ENCODE measurements at regions of chr19 and their contacts with region 1.

Region 1: DNA sequence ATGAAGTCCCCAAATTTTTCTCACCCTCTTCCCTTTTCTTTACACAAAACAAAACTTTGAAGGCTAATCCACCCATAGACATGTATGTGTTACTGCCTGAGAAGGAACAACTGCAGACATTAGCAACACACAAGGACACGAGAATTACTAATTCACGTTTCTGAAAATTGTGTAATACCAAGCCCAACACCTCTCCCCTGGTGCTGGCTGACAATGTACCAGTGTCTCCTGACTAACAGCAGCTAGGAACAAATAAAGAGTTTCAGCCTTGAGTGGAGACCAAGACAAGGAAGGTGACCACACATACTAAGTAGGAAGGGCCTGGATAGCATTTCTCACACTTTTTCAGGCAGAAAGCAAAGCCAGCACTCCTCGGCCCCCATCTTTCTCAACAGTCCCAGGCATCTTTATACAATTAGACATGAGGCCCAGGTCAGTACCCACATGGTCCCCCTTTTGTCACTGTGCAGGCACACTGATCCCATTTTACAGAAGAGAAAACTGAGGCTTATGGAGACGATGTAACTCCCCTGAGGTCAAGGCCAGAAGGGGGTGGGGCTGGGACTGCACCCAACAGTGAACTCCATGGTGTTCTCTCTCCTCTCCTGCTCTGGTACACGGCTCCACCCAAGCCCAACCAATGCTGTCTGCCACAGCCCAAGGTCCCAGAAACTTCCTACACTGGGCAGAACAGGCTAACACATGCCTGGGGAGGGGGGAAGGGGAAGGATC is 8.7 kb downstream of the BRD4 start:
- DNase-seq: peak in 2 of 5 donors; percentile 67 to 68
- ATAC-seq: peak; percentile 64 to 80 (median 76)
- H3K4me3 ChIP-seq: no peak overlapping the region
- H3K27ac ChIP-seq: peak overlapping the region in 9 of 12 donors; percentile 25 to 75 (median 59)
- H3K4me1 ChIP-seq: peaks cover 19 to 99% (median 95%) of the 10 kb centered on the region in 12 donors
- H3K27me3 ChIP-seq: no peaks in the 10 kb centered on the region
- CTCF ChIP-seq: no peak
- POLR2A ChIP-seq: no peak

Region 2: GRCh38 chr19:14795078-14795721 is 528.5 kb before region 1 on chr19:
- intact Hi-C with region 1: no loop called
- DNase-seq: no peak
- ATAC-seq: no peak
- H3K4me3 ChIP-seq: no peak overlapping the region
- H3K27ac ChIP-seq: no peak overlapping the region
- H3K4me1 ChIP-seq: peaks cover 0 to 12% (median 0%) of the 10 kb centered on the region in 12 donors
- H3K27me3 ChIP-seq: peaks cover 0 to 8% (median 0%) of the 10 kb centered on the region in 9 donors
- CTCF ChIP-seq: no peak
- POLR2A ChIP-seq: no peak

Region 3: GRCh38 chr19:15280915-15281683 is 42.6 kb before region 1 on chr19:
- intact Hi-C with region 1: loop called in 5 of 10 experiments (anchors 5 kb)
- DNase-seq: peak; percentile 81 to 92 (median 90)
- ATAC-seq: peak; percentile 82 to 92 (median 88)
- H3K4me3 ChIP-seq: peak overlapping the region in 2 of 12 donors; percentile 10 to 13
- H3K27ac ChIP-seq: peak overlapping the region in 11 of 12 donors; percentile 14 to 83 (median 58)
- H3K4me1 ChIP-seq: peaks cover 45 to 100% (median 96%) of the 10 kb centered on the region in 12 donors
- H3K27me3 ChIP-seq: no peaks in the 10 kb centered on the region
- CTCF ChIP-seq: peak in 8 of 12 donors; percentile 10 to 53 (median 22)
- POLR2A ChIP-seq: no peak

Region 4: DNA sequence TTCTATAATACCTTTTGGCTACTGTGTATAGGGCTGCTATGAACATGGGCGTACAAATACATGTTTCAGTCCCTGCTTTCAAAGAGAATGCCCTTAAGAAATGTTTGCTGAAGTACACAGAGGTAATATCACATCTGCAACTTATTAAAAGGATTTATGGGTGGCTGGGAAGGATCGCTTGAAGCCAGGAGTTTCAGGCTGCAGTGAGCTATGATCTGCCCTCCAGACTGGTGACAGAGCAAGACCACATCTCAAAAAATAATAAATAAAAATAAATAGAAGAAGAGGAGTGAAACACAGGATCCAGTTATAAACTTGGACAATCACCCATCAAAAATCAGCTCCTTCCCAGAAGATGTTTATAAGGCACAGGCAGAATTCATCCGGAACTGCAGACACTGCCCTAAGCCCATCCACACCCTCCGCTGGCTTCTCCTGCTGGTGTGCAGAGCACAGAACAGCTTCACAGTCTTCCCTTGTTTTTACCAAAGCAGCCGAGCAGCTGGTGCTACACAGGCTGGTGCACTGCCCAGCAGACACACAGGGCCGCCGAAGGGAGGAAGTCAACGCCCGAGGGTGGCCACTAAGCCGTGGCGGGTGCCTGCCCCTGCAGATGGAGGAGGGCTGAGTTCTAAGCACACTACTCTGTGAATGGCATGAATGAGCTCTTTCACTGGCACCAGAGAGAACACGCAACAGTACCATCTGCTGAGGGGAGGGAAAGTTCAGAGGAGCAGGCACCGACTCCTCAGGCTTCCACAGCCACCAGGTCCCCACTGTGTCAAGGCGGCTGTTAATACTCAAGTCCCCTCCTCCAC is 35.3 kb before region 1 on chr19:
- intact Hi-C with region 1: loop called in 7 of 10 experiments (anchors 5 kb)
- DNase-seq: peak in 1 of 5 donors; percentile 60
- ATAC-seq: peak; percentile 25 to 55 (median 32)
- H3K4me3 ChIP-seq: peak overlapping the region in 2 of 12 donors; percentile 11 to 15
- H3K27ac ChIP-seq: peak overlapping the region in 3 of 12 donors; percentile 0 to 10 (median 8)
- H3K4me1 ChIP-seq: peaks cover 30 to 100% (median 100%) of the 10 kb centered on the region in 12 donors
- H3K27me3 ChIP-seq: no peaks in the 10 kb centered on the region
- CTCF ChIP-seq: no peak
- POLR2A ChIP-seq: no peak

Region 5: DNA sequence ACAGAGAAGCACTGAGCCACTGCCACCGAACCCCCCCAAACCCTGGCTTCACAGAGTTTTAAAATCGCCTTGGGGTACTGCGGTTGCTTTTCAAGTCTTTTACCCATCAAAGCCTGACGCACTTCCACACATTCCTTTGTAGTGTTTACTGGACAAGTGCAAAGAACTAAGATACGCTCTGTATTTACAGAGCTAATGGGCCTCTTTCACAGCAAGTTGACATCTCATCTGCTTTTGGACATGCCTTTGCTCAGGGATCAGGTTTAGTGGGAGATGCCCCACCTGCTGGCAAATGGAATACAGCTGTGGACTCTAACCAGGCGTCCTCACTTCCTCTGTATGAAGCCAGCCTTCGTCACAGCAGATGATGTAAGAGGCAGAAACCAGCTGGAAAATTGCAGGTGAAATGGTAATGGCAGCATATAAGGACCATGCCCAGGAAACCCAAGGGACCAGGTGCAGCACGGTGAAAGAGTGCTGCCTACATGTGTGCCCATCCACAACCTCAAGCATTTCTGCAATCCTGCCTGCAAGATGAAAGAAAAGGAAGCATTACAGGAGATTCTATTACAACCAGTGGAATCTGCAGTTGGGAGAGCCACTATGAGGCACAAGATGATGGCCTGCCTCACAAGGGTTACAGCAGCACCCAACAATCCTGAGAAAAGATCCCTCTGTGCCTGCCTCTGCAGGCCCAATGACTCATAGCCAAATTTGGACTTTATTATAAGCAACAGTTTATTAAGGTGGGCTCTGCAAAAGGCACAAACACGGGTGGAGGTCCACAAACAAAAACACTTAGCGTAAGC is 26.0 kb before region 1 on chr19:
- intact Hi-C with region 1: loop called in 3 of 10 experiments (anchors 2 to 5 kb)
- DNase-seq: no peak
- ATAC-seq: no peak
- H3K4me3 ChIP-seq: no peak overlapping the region
- H3K27ac ChIP-seq: peak overlapping the region in 2 of 12 donors; percentile 6 to 75
- H3K4me1 ChIP-seq: peaks cover 37 to 99% (median 91%) of the 10 kb centered on the region in 12 donors
- H3K27me3 ChIP-seq: no peaks in the 10 kb centered on the region
- CTCF ChIP-seq: no peak
- POLR2A ChIP-seq: no peak